HEK293 (cell line): ENCODE measurements at regions of chr21 and their contacts with region 1.

Region 1: DNA sequence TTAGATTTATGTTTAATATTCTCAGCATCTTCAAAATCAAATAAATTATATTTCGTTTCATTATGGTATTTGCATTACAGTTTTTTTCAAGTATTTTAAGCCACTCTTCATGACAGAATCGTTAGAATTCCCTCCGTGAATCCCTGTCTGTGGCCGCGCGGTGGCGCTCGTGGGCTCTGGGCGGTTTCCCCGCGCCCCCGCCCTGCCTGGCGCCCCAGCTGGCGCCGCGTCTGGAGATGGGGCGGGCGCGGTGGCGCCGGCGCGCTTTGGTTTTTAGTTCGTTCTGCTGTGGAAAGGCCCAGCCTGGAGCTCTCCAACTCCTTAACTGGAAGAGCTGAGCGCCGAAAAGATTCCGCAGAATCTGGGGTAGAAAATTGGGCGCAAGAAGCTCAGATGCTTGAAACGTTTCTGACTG is 25.7 kb downstream of the PRMT2 start:
- H3K4me3 ChIP-seq: no peak overlapping the region
- H3K27ac ChIP-seq: peak overlapping the region; percentile 53; the same call in 1 of the 2 replicates
- H3K4me1 ChIP-seq: no peaks in the 10 kb centered on the region
- CTCF ChIP-seq: no peak

Region 2: GRCh38 chr21:46458315-46459023 is 202.7 kb before region 1 on chr21 and contains the start of gene DIP2A:
- CTCF ChIA-PET with region 1: no interaction called
- POLR2A ChIA-PET with region 1: no interaction called
- H3K4me3 ChIP-seq: peak within 1 kb of the TSS; percentile 86
- H3K27ac ChIP-seq: peak within 1 kb of the TSS; percentile 92
- H3K4me1 ChIP-seq: 0 out of 2 replicates have a peak, but pooled peaks cover 3% of the 10 kb centered on the region
- CTCF ChIP-seq: peak; percentile 84

Region 3: DNA sequence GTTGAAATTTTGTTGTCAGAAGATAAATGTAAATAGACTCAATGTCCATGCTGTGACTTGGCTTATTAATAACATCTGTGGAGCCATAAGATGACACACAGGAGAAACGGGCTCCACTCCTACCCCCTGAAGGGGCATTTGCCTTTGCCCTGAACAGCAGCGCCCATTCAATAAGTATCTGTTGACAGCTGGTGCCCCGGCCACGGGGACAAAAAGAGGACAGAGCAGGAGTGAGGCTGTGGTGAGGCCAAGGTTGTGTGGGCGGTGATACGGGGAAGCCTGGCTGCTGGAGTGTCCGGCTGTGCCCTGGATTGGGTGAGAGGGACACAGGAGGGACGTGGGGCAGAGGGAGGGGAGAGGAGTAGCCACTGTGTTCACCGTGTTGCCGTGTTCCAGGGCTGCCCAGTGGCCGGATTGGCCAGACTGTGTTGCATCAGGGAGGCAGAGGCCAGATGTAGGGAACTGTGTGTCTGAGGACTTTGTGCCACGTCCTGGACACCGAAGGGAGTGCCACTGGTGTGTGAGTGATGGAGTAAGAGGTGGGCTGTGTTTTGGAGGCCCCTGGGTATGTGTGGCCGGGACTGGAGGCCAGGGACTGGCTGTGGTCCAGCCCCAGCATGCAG is 10.6 kb before region 1 on chr21:
- CTCF ChIA-PET with region 1: interaction called, 11 read pairs
- POLR2A ChIA-PET with region 1: no interaction called
- H3K4me3 ChIP-seq: no peak overlapping the region
- H3K27ac ChIP-seq: no peak overlapping the region
- H3K4me1 ChIP-seq: no peaks in the 10 kb centered on the region
- CTCF ChIP-seq: no peak